ENCODE measurements at regions of chr10 and their contacts with region 1.

Region 1: DNA sequence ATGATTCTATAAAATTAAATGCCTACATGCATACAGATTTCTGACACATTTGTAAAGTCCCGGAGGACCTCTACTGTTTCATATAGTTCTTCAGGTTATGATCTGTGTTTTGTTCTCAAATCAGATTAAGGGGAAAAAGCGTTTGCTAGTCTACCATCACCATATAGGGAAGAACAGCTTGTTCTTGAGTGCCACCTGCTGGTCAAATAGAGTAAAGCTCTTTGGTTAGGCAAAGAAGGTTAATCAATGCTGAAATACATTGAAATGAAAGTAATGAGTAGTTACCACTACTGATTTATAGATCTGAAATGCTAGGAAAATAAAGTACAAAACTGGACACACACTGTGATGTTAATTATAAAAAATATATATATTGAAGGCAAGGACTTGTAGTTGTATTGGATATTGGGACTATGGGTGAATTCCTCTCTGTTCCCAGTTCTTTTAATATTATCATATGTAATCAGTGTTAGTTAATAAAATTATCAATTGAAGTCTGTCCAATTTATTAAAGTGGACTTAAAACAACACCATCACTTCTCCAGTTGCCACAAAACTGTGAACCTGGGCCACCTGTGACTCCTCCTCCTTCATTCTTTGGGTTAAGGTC is 72.6 kb upstream of the PDLIM1 start:
- DNase-seq: peak; percentile 52
- H3K4me3 ChIP-seq: no peak overlapping the region
- H3K27ac ChIP-seq: no peak overlapping the region
- H3K4me1 ChIP-seq: peaks cover 19% of the 10 kb centered on the region
- H3K27me3 ChIP-seq: no peaks in the 10 kb centered on the region
- CTCF ChIP-seq: peak; percentile 85 to 94

Region 2: GRCh38 chr10:94991243-94991888 is 372.0 kb before region 1 on chr10:
- CTCF ChIA-PET with region 1: no interaction called
- dilution Hi-C with region 1: no loop called
- in situ Hi-C with region 1: no loop called
- intact Hi-C with region 1: no loop called
- DNase-seq: peak; percentile 19
- H3K4me3 ChIP-seq: no peak overlapping the region
- H3K27ac ChIP-seq: no peak overlapping the region
- H3K4me1 ChIP-seq: no peaks in the 10 kb centered on the region
- H3K27me3 ChIP-seq: no peaks in the 10 kb centered on the region
- CTCF ChIP-seq: no peak

Region 3: DNA sequence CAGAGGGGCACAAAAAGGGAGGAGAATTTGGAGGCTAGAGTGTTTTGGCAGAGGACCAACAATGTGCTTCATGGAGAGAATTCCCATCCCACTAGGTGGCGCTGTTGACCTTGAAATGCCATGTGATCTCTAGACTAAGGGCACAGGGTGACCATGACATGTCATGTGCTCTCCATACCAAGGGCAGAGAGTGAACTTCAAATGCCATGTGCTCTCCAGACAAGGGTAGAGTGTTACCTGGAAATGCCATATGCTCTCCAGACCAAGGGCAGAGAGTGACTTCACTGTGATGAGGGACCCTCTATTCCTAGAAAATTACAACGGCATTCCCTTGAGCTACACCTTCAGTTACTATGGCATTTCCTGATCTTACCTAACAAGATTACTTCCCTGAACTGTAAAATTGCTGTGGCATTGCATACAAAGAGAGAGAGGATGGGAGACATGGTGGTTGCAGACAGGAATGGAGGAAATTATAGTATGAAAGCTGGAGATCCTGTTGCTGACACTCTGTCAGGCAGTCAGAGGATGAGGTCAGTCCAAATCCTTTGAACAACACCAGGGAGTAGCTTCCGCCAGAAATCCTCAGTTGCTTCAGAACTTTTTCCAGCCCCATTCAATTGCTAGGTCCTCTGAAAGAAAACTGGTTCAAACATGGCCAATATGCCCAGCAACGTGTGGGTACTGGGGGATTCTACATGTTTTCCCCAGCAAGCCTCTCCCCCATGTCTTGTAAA is 230.2 kb before region 1 on chr10:
- CTCF ChIA-PET with region 1: no interaction called
- dilution Hi-C with region 1: no loop called
- in situ Hi-C with region 1: loop called in 1 of 2 experiments (anchors 10 kb)
- intact Hi-C with region 1: loop called (anchors 1 kb)
- DNase-seq: peak; percentile 64
- H3K4me3 ChIP-seq: no peak overlapping the region
- H3K27ac ChIP-seq: no peak overlapping the region
- H3K4me1 ChIP-seq: no peaks in the 10 kb centered on the region
- H3K27me3 ChIP-seq: no peaks in the 10 kb centered on the region
- CTCF ChIP-seq: peak; percentile 84

Region 4: DNA sequence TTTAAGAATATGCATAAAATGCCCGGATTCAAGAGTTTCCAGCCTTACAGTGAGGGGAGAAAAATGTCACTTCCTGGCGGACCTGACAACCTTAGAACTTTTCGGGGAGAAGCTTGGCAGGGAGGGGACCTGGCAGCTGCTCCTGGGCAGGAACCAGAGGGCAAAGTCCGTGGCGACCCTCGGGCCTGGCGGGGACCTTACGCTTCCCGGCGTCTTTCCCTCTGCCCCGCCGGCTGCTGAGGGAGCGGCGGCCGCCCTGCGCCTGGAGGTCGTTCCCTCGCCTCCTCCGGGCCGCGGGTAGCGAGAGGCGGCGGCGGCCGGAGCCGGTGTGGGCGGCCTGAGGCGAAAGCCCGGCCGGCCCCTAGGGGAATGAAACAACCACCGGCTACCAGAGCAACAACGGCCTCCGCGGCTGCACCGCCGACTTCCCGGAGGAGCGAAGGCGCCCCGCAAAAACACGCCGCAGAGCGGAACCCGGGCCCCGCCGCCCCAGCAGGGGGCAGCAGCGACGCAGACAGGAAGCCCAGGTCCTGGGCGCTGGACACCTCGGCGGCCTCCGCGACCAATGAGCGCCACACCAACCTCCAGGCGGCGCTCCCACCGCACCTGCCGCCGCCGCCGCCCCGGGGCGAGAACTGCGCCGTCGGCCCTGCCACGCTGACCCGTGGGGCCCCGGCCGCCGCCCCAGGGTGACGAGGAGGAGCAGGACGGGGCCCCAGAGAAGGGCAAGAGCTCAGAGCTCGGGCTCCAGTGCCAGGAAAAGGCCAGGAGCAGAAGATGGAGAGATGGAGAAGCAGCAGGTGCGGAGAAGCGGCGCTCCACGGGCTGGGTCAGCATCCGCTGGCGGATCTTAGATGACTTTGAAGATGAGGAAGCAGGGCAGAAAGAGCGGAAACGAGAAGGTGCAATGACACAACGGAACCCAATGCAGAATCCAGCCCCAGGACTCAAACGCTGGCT is 179.9 kb before region 1 on chr10:
- CTCF ChIA-PET with region 1: no interaction called
- dilution Hi-C with region 1: no loop called
- in situ Hi-C with region 1: no loop called
- intact Hi-C with region 1: loop called (anchors 1 kb)
- DNase-seq: peak; percentile 70
- H3K4me3 ChIP-seq: peak overlapping the region; percentile 58 to 66 (median 66)
- H3K27ac ChIP-seq: no peak overlapping the region
- H3K4me1 ChIP-seq: peaks cover 4% of the 10 kb centered on the region
- H3K27me3 ChIP-seq: no peaks in the 10 kb centered on the region
- CTCF ChIP-seq: peak; percentile 49 to 74

Region 5: DNA sequence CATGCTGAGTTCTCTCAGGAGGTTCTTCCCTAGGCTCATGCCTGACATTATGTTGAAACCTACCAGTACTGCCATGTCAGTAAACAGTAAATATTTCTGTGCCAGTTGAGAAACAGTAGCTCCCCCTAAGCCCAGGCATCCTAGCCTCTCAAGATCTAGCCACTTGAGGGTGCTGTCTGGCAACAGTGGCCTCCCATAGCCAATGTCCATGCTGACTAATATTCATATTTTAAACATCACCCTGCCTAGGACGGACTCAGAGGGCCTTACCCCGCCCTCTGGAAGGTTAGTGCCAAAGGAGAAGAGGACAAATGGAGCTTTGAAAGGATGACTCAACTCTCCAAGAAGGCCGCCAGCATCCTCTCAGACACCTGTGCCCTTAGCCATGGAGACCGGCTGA is 161.7 kb before region 1 on chr10:
- CTCF ChIA-PET with region 1: interaction called, 21 read pairs
- dilution Hi-C with region 1: no loop called
- in situ Hi-C with region 1: loop called (anchors 5 kb)
- intact Hi-C with region 1: loop called (anchors 1 kb)
- DNase-seq: peak; percentile 89
- H3K4me3 ChIP-seq: no peak overlapping the region
- H3K27ac ChIP-seq: no peak overlapping the region
- H3K4me1 ChIP-seq: no peaks in the 10 kb centered on the region
- H3K27me3 ChIP-seq: no peaks in the 10 kb centered on the region
- CTCF ChIP-seq: peak; percentile 78 to 81

Region 6: GRCh38 chr10:95208702-95209391 is 154.6 kb before region 1 on chr10:
- CTCF ChIA-PET with region 1: interaction called, 3 read pairs
- dilution Hi-C with region 1: no loop called
- in situ Hi-C with region 1: loop called (anchors 5 kb)
- intact Hi-C with region 1: loop called (anchors 1 kb)
- DNase-seq: no peak
- H3K4me3 ChIP-seq: no peak overlapping the region
- H3K27ac ChIP-seq: no peak overlapping the region
- H3K4me1 ChIP-seq: peaks cover 7% of the 10 kb centered on the region
- H3K27me3 ChIP-seq: no peaks in the 10 kb centered on the region
- CTCF ChIP-seq: peak; percentile 12 to 46

Region 7: GRCh38 chr10:95229724-95230627 is 133.4 kb before region 1 on chr10:
- CTCF ChIA-PET with region 1: no interaction called
- dilution Hi-C with region 1: loop called (anchors 5 kb)
- in situ Hi-C with region 1: no loop called
- intact Hi-C with region 1: no loop called
- DNase-seq: peak; percentile 96
- H3K4me3 ChIP-seq: peak overlapping the region in 1 of 3 experiments; percentile 28
- H3K27ac ChIP-seq: peak overlapping the region; percentile 100
- H3K4me1 ChIP-seq: peaks cover 32% of the 10 kb centered on the region
- H3K27me3 ChIP-seq: no peaks in the 10 kb centered on the region
- CTCF ChIP-seq: no peak

Region 8: DNA sequence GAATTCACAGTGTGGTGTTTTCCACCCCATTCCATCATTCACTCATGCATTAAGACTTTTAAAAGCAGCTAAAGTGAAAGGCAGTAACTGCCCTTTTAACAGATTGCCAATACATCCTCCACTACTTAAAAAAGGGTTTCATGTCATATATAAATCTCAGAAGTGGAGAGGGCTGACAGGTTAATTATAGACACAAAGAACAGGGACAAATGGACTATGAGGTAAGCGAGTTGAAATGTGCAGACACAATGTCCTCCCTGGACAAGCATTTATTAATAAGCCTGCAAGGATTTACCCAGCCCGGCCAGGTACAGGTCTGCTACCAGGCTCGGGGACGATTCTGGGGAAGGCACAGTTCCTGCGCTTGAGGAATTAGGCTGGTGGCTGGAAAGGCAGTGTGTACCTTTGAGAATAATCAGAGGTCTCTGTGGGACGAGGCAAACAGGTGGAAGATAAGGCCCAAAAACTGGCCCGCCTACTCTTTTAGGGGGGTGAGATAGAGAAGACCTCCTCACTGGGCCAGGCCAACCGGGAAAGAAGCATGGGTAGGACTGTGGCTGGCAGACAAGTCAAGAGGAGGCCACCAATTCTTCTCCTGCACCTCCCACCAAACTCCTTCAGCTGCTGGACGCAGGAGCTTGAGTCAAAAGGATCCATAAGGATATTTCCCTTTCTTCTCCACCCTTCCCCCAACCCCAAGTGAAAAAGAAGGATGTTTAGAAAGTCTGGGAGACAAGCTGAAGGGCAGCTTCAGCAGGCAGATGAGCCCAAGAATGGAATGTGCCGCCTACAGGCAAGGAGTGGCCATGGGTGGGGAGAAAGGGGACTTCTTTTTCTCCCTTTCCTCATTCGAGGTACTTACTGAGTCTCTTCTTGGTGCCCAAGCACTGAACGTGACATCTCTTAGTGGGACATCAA is 74.1 kb before region 1 on chr10:
- CTCF ChIA-PET with region 1: interaction called, 16 read pairs
- dilution Hi-C with region 1: no loop called
- in situ Hi-C with region 1: no loop called
- intact Hi-C with region 1: loop called (anchors 2 kb)
- DNase-seq: peak; percentile 42
- H3K4me3 ChIP-seq: peak overlapping the region; percentile 73 to 97 (median 75)
- H3K27ac ChIP-seq: peak overlapping the region; percentile 83
- H3K4me1 ChIP-seq: peaks cover 42% of the 10 kb centered on the region
- H3K27me3 ChIP-seq: no peaks in the 10 kb centered on the region
- CTCF ChIP-seq: peak; percentile 4 to 36

Measured in mammary epithelial cell (primary cell).